Activated CD4-positive, alpha-beta T cell treated with anti-CD3 and anti-CD28 coated beads for 36 hours (primary cell): ENCODE measurements at regions of chr11 and their contacts with region 1.

Region 1: GRCh38 chr11:6377902-6378639 is 12.2 kb upstream of the SMPD1 start:
- DNase-seq: no peak
- ATAC-seq: peak; percentile 79
- H3K4me3 Mint-ChIP-seq: no peak overlapping the region
- H3K27ac Mint-ChIP-seq: peak overlapping the region; percentile 79
- H3K4me1 Mint-ChIP-seq: peaks cover 26% of the 10 kb centered on the region
- H3K27me3 Mint-ChIP-seq: no peaks in the 10 kb centered on the region

Region 2: DNA sequence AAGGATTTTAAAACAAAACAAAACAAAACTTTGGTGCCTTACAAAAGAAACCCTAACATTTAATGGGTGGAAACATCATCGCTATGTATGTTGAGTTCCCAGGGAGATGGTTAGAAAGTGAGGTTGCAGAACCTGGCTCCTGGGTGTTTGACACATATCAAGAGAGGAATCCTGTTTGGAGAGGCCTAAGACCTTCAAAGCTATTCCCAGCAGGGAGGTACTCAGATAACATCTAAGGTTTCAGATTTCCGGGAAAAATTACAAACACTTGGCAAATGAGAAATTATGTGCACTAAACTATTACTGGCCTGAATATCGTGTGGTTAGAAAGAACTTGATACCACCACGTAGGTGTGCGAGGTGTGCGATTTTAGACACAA is 711.7 kb before region 1 on chr11:
- CTCF ChIA-PET with region 1: no interaction called
- POLR2A ChIA-PET with region 1: no interaction called
- intact Hi-C with region 1: no loop called
- DNase-seq: no peak
- ATAC-seq: no peak
- H3K4me3 Mint-ChIP-seq: no peak overlapping the region
- H3K27ac Mint-ChIP-seq: no peak overlapping the region
- H3K4me1 Mint-ChIP-seq: no peaks in the 10 kb centered on the region
- H3K27me3 Mint-ChIP-seq: no peaks in the 10 kb centered on the region

Region 3: DNA sequence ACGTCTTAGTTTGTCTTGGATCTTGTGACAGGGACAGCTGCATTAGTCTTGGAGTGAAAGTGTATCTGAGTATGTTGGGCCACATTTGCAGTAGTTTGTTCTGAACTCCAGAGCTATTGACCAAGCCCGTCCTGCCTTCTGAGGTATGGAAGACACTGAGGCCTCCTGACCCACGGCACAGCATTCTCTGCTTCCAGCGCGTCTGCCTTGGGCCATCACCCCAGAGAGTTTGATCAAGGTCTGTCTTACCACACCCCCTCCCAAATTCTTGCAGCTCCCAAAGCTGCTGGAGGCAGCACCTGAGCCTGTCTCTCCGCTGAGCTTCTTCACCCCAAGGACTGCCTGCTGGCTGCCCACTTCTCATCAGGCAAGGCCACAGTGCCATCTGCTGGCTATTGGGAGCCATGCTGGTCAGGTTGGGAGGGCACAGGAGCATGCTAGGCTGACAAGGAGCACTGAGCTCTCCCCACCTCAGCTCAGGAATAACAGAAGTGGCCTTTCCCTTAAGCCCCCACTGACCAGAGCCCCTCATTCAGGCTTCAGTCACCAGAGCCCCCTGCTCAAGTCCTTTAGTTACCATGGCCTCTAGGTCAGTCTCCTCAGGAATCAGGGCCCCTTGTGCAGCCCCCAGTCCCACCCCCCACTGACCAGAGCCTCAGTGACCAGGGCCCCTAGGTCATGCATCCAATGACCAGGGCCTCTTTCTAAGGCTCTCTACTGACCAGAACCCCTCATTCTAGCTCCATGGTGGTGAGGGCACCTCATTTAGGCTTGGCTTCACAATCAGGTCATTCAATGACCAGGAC is 15.0 kb before region 1 on chr11:
- CTCF ChIA-PET with region 1: interaction called, 50 read pairs
- POLR2A ChIA-PET with region 1: no interaction called
- intact Hi-C with region 1: no loop called
- DNase-seq: peak; percentile 86
- ATAC-seq: peak; percentile 97
- H3K4me3 Mint-ChIP-seq: no peak overlapping the region
- H3K27ac Mint-ChIP-seq: no peak overlapping the region
- H3K4me1 Mint-ChIP-seq: no peaks in the 10 kb centered on the region
- H3K27me3 Mint-ChIP-seq: no peaks in the 10 kb centered on the region

Region 4: GRCh38 chr11:6419009-6419631 is 41.0 kb after region 1 on chr11 and contains the start of gene APBB1:
- CTCF ChIA-PET with region 1: interaction called, 21 read pairs
- POLR2A ChIA-PET with region 1: interaction called, 5 read pairs
- intact Hi-C with region 1: no loop called
- DNase-seq: peak; percentile 86
- ATAC-seq: peak; percentile 54
- H3K4me3 Mint-ChIP-seq: peak within 1 kb of the TSS; percentile 72
- H3K27ac Mint-ChIP-seq: peak within 1 kb of the TSS; percentile 73
- H3K4me1 Mint-ChIP-seq: peaks cover 7% of the 10 kb centered on the region
- H3K27me3 Mint-ChIP-seq: peaks cover 6% of the 10 kb centered on the region
- total RNA-seq, gene APBB1: 43.2 to 49.8 TPM

Region 5: DNA sequence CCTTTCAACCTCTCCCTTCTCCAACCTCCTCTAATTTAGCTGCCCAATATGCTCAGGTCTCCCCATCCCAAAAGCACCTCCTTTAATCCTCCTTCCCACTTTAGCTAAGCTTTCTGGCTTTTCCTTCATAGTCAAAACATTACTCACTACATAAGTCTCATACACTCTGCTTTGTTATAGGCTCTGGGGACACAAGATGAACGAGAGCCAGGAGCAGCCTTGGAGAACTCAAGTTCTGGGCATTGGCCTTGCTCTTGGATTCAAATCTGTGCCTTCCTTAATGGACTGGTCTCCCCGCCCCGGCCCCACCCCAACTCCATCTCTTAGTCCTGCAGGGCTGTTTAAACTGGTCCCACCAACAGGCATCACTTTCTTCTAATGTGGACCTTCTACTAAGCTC is 74.1 kb after region 1 on chr11:
- CTCF ChIA-PET with region 1: interaction called, 536 read pairs
- POLR2A ChIA-PET with region 1: no interaction called
- intact Hi-C with region 1: no loop called
- DNase-seq: no peak
- ATAC-seq: no peak
- H3K4me3 Mint-ChIP-seq: no peak overlapping the region
- H3K27ac Mint-ChIP-seq: no peak overlapping the region
- H3K4me1 Mint-ChIP-seq: no peaks in the 10 kb centered on the region
- H3K27me3 Mint-ChIP-seq: no peaks in the 10 kb centered on the region

Region 6: DNA sequence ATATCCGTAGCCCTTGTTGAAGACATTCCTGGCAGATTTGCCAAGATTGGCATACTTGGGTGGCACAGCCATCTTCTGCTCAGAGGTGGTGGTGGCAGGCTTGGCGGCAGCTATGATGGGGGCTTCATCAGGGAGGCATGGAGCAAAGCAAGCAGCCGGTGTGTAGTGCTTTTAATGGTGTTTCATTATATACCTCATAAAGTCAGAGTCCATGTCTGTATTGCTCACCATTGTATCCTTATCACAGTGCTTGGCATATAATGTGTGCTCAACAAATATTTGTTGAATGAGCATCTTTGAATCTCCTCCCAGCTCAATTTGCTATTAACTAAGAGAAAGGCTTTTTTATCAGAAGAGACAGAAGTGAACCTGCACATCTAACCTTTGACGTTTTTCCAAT is 111.2 kb after region 1 on chr11:
- CTCF ChIA-PET with region 1: interaction called, 13 read pairs
- POLR2A ChIA-PET with region 1: no interaction called
- intact Hi-C with region 1: no loop called
- DNase-seq: no peak
- ATAC-seq: no peak
- H3K4me3 Mint-ChIP-seq: no peak overlapping the region
- H3K27ac Mint-ChIP-seq: no peak overlapping the region
- H3K4me1 Mint-ChIP-seq: peaks cover 2% of the 10 kb centered on the region
- H3K27me3 Mint-ChIP-seq: no peaks in the 10 kb centered on the region

Region 7: DNA sequence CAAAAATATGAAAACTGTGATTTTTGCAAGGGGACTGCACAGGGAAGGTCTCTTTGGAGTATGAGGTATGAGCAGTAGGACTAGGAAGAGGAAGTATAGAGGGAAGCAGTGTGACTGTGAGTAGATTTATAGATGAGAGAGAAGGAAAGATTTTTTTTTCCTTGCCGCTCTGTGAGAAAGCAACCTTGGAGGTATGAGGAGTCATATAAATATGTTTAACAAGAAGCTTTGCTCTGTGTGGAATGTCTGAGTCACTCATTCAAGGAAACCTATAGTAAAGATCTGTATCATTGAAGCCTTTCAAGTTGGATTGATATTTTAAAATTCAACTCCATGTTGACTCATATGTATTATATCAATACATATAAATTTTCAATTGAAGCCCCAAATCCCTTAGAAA is 145.2 kb after region 1 on chr11:
- CTCF ChIA-PET with region 1: interaction called, 11 read pairs
- POLR2A ChIA-PET with region 1: no interaction called
- intact Hi-C with region 1: no loop called
- DNase-seq: no peak
- ATAC-seq: peak; percentile 86
- H3K4me3 Mint-ChIP-seq: no peak overlapping the region
- H3K27ac Mint-ChIP-seq: no peak overlapping the region
- H3K4me1 Mint-ChIP-seq: peaks cover 41% of the 10 kb centered on the region
- H3K27me3 Mint-ChIP-seq: no peaks in the 10 kb centered on the region

Region 8: DNA sequence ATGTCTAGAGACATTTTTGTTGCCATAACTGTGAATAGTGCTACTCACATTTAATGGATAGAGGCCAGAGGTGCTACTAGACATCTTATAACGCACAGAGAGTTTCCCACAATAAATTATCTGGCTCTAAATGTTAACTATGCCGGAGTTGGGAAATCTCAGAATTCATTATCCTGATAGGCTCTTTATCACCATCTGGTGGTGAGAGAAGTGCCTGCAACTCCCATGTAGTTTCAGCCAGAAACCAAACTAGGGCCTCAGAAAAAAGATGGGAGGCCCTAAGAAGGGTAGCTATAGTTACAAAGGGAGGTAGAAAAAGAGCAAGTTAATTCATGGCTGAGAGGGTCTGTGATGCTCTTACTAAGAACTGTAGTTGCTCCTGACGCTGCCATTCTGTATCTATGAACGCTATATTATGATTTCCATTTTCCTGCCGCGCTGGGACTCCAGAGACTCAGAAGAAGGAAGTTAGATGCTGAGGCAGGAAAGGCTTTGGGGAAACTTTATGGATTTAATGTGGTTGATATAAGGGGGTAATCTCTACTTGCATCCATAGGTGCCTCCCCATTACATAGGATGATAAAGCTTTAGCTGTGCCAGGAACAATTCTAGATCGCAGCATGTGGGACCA is 327.9 kb after region 1 on chr11:
- CTCF ChIA-PET with region 1: interaction called, 15 read pairs
- POLR2A ChIA-PET with region 1: no interaction called
- intact Hi-C with region 1: loop called in 1 of 2 experiments (anchors 1 kb)
- DNase-seq: peak; percentile 59
- ATAC-seq: peak; percentile 75
- H3K4me3 Mint-ChIP-seq: no peak overlapping the region
- H3K27ac Mint-ChIP-seq: peak overlapping the region; percentile 23
- H3K4me1 Mint-ChIP-seq: peaks cover 18% of the 10 kb centered on the region
- H3K27me3 Mint-ChIP-seq: no peaks in the 10 kb centered on the region